Testis (tissue), 5 donors: ENCODE measurements at regions of chr1 and their contacts with region 1.

Region 1: GRCh38 chr1:19485362-19486187 is at the start of gene CAPZB:
- DNase-seq: peak; percentile 94
- H3K4me3 ChIP-seq: peak within 1 kb of the TSS; percentile 100
- H3K27ac ChIP-seq: peak within 1 kb of the TSS; percentile 99
- H3K4me1 ChIP-seq: peaks cover 38% of the 10 kb centered on the region
- H3K27me3 ChIP-seq: no peaks in the 10 kb centered on the region
- CTCF ChIP-seq: no peak
- POLR2A ChIP-seq: no peak
- total RNA-seq, gene CAPZB: 147 to 207 TPM

Region 2: GRCh38 chr1:18926315-18927081 is 559.1 kb before region 1 on chr1:
- intact Hi-C with region 1: no loop called
- DNase-seq: no peak
- H3K4me3 ChIP-seq: no peak overlapping the region
- H3K27ac ChIP-seq: peak overlapping the region in 1 of 2 donors; percentile 53
- H3K4me1 ChIP-seq: peaks cover 17% of the 10 kb centered on the region
- H3K27me3 ChIP-seq: no peaks in the 10 kb centered on the region
- CTCF ChIP-seq: no peak
- POLR2A ChIP-seq: no peak

Region 3: DNA sequence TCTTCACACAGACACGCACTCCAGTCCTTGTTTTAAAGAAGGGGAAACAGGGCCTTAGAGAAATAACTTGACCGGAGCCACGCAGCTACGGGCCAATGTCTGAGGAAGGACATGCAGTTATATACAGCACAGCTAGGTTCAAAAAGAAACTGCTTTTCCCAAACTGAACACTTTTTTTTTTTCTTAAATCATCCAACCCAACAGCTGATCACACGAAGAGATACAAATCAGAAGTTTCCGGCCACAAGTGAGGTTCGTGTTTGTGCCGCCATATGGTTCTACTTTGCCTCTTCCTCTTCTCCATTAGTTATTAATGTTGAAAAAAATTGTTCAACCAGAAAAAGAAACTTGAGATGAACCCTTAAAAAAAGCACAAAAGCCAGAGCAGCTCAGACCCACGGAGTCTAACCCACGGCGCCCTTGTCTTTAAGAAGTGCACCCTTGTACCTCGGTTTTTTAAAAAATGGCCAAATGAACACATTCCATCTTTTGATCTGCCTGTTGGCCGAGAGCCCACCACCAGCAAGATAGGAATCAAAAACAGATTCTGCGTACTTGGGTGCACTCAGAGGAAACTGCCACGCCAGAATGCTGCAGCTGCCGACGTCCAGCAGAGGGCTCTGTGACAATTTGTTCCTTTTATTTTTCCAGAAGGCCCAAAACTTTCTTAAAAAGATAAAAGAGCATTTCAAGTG is 94.5 kb before region 1 on chr1:
- intact Hi-C with region 1: loop called (anchors 10 kb)
- DNase-seq: peak; percentile 67
- H3K4me3 ChIP-seq: no peak overlapping the region
- H3K27ac ChIP-seq: peak overlapping the region; percentile 49 to 59
- H3K4me1 ChIP-seq: peaks cover 40% of the 10 kb centered on the region
- H3K27me3 ChIP-seq: no peaks in the 10 kb centered on the region
- CTCF ChIP-seq: peak; percentile 78 to 84 (median 79)
- POLR2A ChIP-seq: no peak

Region 4: DNA sequence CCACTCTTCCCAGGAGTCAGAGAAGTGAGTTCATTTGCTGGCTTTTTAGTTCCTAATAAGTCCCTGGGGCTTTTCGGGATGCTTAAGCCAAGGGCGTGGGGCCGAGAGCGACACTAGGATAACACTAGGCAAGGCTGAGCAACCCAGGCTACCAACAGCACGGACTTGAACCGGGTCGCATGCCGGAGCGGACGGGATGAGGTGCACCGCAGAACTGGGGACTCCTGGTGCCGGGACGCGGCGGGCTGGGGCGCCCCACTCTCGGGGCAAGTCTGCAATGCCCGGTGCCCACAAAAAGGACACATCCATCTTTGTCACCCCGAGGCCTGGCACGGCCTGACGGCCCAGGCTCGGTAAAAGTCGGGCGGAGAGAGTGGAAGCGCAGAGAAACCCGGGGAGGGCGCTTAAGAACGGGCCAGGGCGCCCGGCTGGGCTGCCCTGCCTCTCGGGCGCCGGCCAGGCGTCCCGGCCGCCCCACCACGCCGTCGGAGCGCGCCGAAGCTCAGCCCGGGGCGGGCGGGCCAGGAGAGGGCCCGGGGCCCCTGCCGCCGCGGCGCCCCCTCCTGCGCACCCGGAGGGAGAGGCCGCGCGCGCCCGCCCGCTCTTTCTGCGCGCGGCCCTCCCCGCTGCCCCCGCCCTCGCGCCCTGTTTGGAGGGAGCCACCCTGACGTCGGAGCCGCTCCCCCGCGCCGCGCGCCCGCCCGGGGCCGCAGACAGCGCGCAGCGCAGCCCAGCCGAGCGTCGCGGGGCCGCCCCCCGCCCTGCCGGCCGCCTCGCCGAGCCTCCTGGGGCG is 158.2 kb after region 1 on chr1 and contains the start of gene NBL1:
- intact Hi-C with region 1: loop called (anchors 10 kb)
- DNase-seq: peak; percentile 75
- H3K4me3 ChIP-seq: peak within 1 kb of the TSS; percentile 77 to 83
- H3K27ac ChIP-seq: peak within 1 kb of the TSS; percentile 84 to 93
- H3K4me1 ChIP-seq: peaks cover 5% of the 10 kb centered on the region
- H3K27me3 ChIP-seq: no peaks in the 10 kb centered on the region
- CTCF ChIP-seq: no peak
- POLR2A ChIP-seq: no peak
- total RNA-seq, gene NBL1: 44.3 to 73.3 TPM